Endothelial cell of umbilical vein (primary cell): ENCODE measurements at regions of chr7 and their contacts with region 1.

Region 1: DNA sequence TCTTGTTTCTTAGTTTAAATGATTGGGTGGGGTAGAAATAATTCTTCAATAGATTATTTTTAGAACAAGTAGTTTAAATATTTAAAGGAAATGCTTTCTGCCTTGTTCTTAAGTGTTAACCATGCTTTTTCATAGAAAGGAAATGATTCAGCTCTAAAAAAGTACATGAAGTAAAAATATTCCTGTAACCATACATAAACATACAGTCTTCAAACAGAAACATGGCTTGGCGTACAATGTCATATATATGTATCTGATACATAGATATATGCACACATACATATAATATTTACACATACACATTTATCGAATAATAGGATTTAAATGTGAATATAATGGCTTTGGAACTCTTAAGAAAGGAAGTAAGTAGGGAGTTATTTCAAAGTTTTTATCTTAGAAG is 84.4 kb downstream of the RUNDC3B start:
- DNase-seq: peak; percentile 78
- H3K4me3 ChIP-seq: peak overlapping the region in 1 of 3 experiments; percentile 80
- H3K27ac ChIP-seq: peak overlapping the region; percentile 79
- H3K4me1 ChIP-seq: peaks cover 18% of the 10 kb centered on the region
- H3K27me3 ChIP-seq: no peaks in the 10 kb centered on the region
- CTCF ChIP-seq: no peak
- POLR2A ChIP-seq: no peak

Region 2: DNA sequence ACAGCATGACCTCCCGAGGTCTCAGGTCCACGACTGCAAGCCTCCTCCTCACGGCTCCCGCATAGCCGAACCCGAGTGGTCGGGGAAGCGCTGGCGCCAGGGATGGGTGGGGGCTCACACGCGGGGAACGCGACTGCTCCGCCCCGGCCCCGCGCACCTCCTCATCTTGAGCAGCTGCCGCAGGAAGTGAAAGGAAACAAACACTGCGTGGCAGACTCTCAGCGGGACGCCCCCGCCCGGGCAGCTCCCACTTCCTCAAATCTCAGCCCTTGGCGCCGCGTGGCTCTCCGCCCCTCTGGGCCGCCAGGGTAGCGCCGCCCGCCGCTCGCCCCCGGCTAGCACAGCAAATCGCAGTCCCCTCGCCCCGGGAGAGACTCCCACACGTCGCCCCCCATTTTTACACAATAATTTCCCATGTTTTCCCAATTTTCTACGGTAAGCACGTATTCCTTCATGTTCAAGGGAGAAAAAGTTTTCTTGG is 493.0 kb before region 1 on chr7 and contains the start of gene TMEM243:
- CTCF ChIA-PET with region 1: no interaction called
- POLR2A ChIA-PET with region 1: no interaction called
- dilution Hi-C with region 1: no loop called
- intact Hi-C with region 1: loop called (anchors 5 kb)
- DNase-seq: peak; percentile 87
- H3K4me3 ChIP-seq: peak within 1 kb of the TSS; percentile 32 to 76 (median 63)
- H3K27ac ChIP-seq: peak within 1 kb of the TSS; percentile 59
- H3K4me1 ChIP-seq: peaks cover 18% of the 10 kb centered on the region
- H3K27me3 ChIP-seq: peaks cover 3 to 13% of the 10 kb centered on the region in 2 experiments
- CTCF ChIP-seq: peak in 1 of 2 donors; percentile 8
- POLR2A ChIP-seq: peak; percentile 35
- total RNA-seq, gene TMEM243: 26.9 and 31.5 TPM in 2 replicates

Region 3: GRCh38 chr7:87628780-87629569 is 83.6 kb before region 1 on chr7:
- CTCF ChIA-PET with region 1: no interaction called
- POLR2A ChIA-PET with region 1: no interaction called
- dilution Hi-C with region 1: no loop called
- intact Hi-C with region 1: loop called (anchors 5 kb)
- DNase-seq: peak; percentile 13
- H3K4me3 ChIP-seq: peak overlapping the region; percentile 44 to 53 (median 49)
- H3K27ac ChIP-seq: no peak overlapping the region
- H3K4me1 ChIP-seq: peaks cover 4% of the 10 kb centered on the region
- H3K27me3 ChIP-seq: peaks cover 0 to 2% of the 10 kb centered on the region in 2 experiments
- CTCF ChIP-seq: no peak
- POLR2A ChIP-seq: no peak

Region 4: GRCh38 chr7:87648316-87648715 is 64.3 kb before region 1 on chr7:
- CTCF ChIA-PET with region 1: interaction called, 5 read pairs
- POLR2A ChIA-PET with region 1: no interaction called
- dilution Hi-C with region 1: no loop called
- intact Hi-C with region 1: loop called (anchors 1 kb)
- DNase-seq: peak; percentile 36
- H3K4me3 ChIP-seq: no peak overlapping the region
- H3K27ac ChIP-seq: no peak overlapping the region
- H3K4me1 ChIP-seq: peaks cover 22% of the 10 kb centered on the region
- H3K27me3 ChIP-seq: no peaks in the 10 kb centered on the region
- CTCF ChIP-seq: no peak
- POLR2A ChIP-seq: no peak

Region 5: DNA sequence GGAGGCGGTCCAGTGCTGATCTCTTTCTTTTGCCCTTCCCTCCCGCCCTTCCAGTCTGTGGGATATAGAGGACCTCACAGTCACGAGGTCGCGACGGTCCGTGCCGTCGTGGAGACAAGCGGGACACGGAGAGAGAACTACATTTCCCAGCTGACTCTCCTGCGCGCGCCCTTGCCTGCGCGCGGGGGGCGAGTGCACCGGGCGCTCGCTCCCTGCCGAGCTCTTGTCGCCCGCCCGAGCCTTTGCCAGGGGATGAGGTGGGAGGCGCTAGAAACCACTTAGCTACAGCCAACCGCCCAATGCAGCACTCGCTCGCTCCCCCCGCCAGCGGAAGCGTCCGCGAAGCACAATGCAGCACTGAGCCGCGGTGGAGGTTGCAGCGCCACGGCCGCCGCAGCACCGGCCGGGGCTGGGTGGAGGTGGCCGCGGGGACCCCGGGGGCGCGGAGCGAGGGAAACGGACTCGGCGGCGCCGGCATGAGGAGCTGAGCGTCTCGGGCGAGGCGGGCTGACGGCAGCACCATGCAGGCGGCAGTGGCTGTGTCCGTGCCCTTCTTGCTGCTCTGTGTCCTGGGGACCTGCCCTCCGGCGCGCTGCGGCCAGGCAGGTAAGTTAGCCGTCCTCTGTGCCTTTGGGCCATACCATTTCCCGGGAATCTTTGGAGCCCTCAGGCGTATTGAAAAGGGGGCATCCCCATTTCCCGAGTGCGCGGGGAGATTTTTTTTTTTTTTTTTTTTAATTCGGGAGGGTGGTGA is 221.6 kb after region 1 on chr7 and contains the start of gene ADAM22:
- CTCF ChIA-PET with region 1: no interaction called
- POLR2A ChIA-PET with region 1: no interaction called
- dilution Hi-C with region 1: no loop called
- intact Hi-C with region 1: loop called (anchors 5 kb)
- DNase-seq: peak; percentile 89
- H3K4me3 ChIP-seq: peak within 1 kb of the TSS; percentile 7 to 66 (median 55)
- H3K27ac ChIP-seq: no peak within 1 kb of the TSS
- H3K4me1 ChIP-seq: peaks cover 11% of the 10 kb centered on the region
- H3K27me3 ChIP-seq: peaks cover 5 to 18% of the 10 kb centered on the region in 2 experiments
- CTCF ChIP-seq: no peak
- POLR2A ChIP-seq: no peak
- total RNA-seq, gene ADAM22: 0.53 and 1.4 TPM in 2 replicates

Region 6: DNA sequence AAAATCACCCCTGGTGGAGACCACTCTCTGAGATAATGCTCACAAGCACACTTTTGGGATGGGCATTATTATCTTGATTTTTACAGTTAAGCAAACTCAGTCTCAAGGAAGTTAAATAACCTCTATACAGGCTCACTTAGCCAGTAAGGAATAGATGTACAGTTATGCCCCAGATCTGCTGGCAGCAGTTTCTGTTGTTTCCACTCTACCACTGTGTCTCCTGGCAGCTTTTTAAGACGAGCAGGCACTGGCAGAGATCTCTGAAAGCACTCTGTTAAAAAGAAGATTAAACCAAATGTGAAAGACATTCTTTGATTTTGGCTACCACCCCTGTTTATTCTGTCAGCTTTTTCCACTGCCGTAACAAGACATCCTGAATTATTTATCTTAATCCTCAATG is 434.0 kb after region 1 on chr7:
- CTCF ChIA-PET with region 1: no interaction called
- POLR2A ChIA-PET with region 1: no interaction called
- dilution Hi-C with region 1: no loop called
- intact Hi-C with region 1: no loop called
- DNase-seq: no peak
- H3K4me3 ChIP-seq: no peak overlapping the region
- H3K27ac ChIP-seq: no peak overlapping the region
- H3K4me1 ChIP-seq: no peaks in the 10 kb centered on the region
- H3K27me3 ChIP-seq: peaks cover 0 to 2% of the 10 kb centered on the region in 2 experiments
- CTCF ChIP-seq: no peak
- POLR2A ChIP-seq: no peak

Region 7: DNA sequence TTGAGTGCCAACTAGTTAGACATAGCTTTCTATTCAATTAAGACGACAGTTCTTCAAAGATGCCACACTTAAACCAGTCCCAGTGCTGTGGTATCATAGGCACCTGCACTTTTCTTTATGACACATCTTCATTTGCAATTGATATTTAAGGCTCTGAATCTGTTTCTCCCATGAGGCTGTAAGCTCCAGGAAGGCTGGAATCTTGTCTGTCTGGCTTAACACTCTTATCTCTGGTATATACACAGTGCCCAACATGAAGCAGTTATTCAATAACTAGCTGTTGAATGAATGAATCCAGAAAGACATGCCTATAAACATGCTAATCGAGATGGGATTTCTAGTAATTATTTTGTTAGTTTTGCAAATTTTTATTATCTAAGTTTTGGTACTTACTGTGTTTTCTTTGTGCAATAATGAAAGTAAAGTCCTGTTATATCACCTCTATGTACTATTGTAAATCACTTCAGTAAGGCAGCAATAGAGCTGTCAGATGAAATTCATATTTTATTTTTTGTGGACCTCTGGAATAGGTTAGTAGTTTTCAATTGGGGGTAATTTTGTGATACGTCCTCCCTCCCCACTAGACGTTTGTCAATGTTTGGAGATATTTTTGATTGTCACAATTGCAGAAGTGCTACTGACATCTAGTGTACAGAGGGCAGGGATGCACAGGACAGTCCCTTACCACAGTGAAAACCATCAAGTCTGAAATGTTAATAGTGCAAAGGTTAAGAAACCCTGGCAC is 645.4 kb after region 1 on chr7:
- CTCF ChIA-PET with region 1: no interaction called
- POLR2A ChIA-PET with region 1: no interaction called
- dilution Hi-C with region 1: no loop called
- intact Hi-C with region 1: no loop called
- DNase-seq: no peak
- H3K4me3 ChIP-seq: no peak overlapping the region
- H3K27ac ChIP-seq: no peak overlapping the region
- H3K4me1 ChIP-seq: no peaks in the 10 kb centered on the region
- H3K27me3 ChIP-seq: peaks cover 2 to 5% of the 10 kb centered on the region in 2 experiments
- CTCF ChIP-seq: peak in 1 of 2 donors; percentile 26
- POLR2A ChIP-seq: no peak